ENCODE measurements at regions of chr6 and their contacts with region 1.

Region 1: GRCh38 chr6:16332175-16332542 is 93.8 kb downstream of the GMPR start:
- DNase-seq: peak; percentile 94
- H3K4me3 Mint-ChIP-seq: no peak overlapping the region
- H3K27ac Mint-ChIP-seq: no peak overlapping the region
- H3K4me1 Mint-ChIP-seq: peaks cover 3% of the 10 kb centered on the region
- H3K27me3 Mint-ChIP-seq: no peaks in the 10 kb centered on the region

Region 2: GRCh38 chr6:16409531-16410441 is 77.6 kb after region 1 on chr6:
- intact Hi-C with region 1: loop called (anchors 2 kb)
- DNase-seq: peak; percentile 86
- H3K4me3 Mint-ChIP-seq: no peak overlapping the region
- H3K27ac Mint-ChIP-seq: peak overlapping the region; percentile 26
- H3K4me1 Mint-ChIP-seq: peaks cover 52% of the 10 kb centered on the region
- H3K27me3 Mint-ChIP-seq: no peaks in the 10 kb centered on the region

Region 3: DNA sequence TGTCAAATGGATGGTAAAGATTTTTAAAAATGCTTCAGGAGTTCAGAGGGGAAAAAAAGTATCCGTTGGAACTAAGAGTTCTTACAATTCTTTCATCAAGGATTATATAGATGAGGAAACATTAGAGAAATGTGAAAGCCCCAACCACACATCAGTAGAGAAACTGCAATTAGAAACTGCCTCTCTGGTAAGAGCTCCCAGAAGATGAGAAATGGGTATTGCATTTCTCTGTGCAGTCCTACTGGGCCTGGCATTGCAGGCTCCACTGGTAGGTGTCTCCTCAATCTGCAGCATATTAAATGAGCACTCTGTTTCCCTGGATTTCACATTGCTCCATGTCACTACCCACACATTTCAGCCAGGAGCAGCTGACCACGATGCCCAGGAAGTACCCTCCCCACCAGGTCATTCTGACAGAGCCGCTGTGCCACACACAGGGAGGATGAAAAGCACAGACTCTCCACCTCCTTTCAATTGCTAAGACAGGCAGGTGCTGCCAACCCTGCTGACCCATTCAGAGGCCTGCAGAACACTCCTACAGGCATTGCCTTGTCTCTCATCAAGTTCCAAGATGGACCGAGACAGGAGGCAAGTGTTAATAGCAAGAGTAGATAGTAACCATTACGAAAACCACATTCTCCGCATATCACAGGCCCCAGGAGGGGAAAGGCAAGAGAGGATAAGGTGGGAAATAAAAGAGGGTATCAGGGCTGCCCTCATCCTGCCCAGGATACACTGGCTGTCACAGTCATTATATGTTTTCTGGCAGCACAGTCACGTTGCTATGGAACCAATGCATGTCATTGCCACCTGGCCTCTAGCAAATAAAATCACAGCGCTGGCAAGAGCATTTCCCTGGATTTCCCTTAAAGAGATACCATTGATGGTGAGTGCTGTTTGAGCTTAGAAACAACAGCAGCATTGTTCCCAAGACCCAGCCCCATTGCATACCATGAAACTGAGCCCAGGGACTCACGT is 187.4 kb after region 1 on chr6:
- intact Hi-C with region 1: no loop called
- DNase-seq: no peak
- H3K4me3 Mint-ChIP-seq: no peak overlapping the region
- H3K27ac Mint-ChIP-seq: no peak overlapping the region
- H3K4me1 Mint-ChIP-seq: peaks cover 37% of the 10 kb centered on the region
- H3K27me3 Mint-ChIP-seq: no peaks in the 10 kb centered on the region

Region 4: DNA sequence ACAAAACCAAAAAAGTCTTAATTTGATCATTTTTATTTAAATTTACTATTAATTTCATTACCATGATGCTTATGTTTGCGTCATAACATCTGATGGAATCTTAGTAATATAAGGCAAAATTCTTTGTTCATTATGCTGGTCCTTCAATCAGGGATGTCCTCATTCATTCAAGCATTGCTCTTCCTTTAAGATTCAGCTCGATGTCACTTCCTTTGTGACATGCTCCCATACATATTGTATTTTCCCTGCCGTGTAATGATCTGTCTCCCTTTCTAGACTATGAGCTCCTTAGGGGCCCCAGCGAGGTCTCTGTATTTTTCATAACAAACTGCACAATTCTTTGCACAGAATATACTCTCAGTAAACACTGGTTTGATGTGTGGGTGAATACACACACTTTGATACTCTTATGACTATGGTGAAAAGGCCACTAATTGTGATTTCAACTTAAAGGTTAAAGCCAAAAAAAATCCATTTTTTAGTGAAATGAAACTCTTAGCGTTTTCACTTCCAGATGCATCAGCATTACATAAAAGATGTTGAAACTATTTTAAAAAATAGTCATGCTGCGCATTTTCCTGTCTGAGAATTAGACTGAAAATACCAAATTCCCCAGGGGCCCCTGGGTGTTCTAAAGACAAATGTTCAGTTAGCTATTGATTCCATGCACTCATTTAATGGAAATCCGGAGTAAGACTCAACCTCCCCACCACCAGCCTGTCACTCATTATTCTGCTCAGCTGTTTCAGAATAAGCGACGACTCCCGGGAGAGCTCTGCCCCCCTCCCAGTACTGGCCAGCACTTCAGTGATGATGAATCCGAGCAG is 259.4 kb after region 1 on chr6:
- intact Hi-C with region 1: loop called (anchors 5 kb)
- DNase-seq: no peak
- H3K4me3 Mint-ChIP-seq: peak overlapping the region; percentile 16
- H3K27ac Mint-ChIP-seq: peak overlapping the region; percentile 87
- H3K4me1 Mint-ChIP-seq: peaks cover 24% of the 10 kb centered on the region
- H3K27me3 Mint-ChIP-seq: no peaks in the 10 kb centered on the region

Region 5: GRCh38 chr6:16836144-16836981 is 504.2 kb after region 1 on chr6:
- intact Hi-C with region 1: loop called (anchors 5 kb)
- DNase-seq: peak; percentile 66
- H3K4me3 Mint-ChIP-seq: peak overlapping the region; percentile 61
- H3K27ac Mint-ChIP-seq: peak overlapping the region; percentile 71
- H3K4me1 Mint-ChIP-seq: peaks cover 30% of the 10 kb centered on the region
- H3K27me3 Mint-ChIP-seq: peaks cover 10% of the 10 kb centered on the region

Region 6: GRCh38 chr6:17086469-17086868 is 754.3 kb after region 1 on chr6:
- intact Hi-C with region 1: loop called (anchors 2 kb)
- DNase-seq: peak; percentile 63
- H3K4me3 Mint-ChIP-seq: no peak overlapping the region
- H3K27ac Mint-ChIP-seq: no peak overlapping the region
- H3K4me1 Mint-ChIP-seq: no peaks in the 10 kb centered on the region
- H3K27me3 Mint-ChIP-seq: peaks cover 4% of the 10 kb centered on the region

Measured in activated CD4-positive, alpha-beta T cell treated with anti-CD3 and anti-CD28 coated beads, Interleukin-2, amount 10 ng/mL, durations not matched to agents 24 days and 14 days (primary cell).